GM12878 (cell line): ENCODE measurements at regions of chr13 and their contacts with region 1.

Region 1: GRCh38 chr13:43132257-43132656 is 108.9 kb downstream of the DNAJC15 start:
- DNase-seq: no peak
- ATAC-seq: peak; percentile 71
- H3K4me3 ChIP-seq: no peak overlapping the region
- H3K27ac ChIP-seq: no peak overlapping the region
- H3K4me1 ChIP-seq: 0 out of 2 replicates have a peak, but pooled peaks cover 8% of the 10 kb centered on the region
- H3K27me3 ChIP-seq: no peaks in the 10 kb centered on the region; a peak in 1 of 4 replicates
- CTCF ChIP-seq: peak; percentile 18 to 67 (median 39); a peak in 5 of 6 replicates
- EP300 ChIP-seq: no peak
- POLR2A ChIP-seq: no peak
- RAD21 ChIP-seq: peak; percentile 77

Region 2: DNA sequence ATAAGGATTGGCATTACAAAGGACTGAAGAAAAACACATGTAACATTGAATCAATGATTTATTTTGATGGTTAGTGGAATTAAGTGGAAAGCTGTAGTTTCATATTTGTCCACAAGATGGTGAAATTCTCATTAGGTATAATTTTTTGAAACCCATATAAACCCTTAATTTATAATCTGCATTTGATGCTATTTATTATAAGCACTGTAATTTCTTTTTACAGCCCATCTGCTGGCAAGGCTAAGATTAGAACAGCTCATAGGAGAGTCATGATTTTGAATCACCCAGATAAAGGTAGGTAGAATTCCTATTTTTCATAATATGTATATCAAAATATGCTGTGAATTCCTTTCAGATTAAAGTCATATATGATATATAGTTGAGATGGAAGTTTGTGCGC is 46.7 kb before region 1 on chr13:
- CTCF ChIA-PET with region 1: interaction called, 11 read pairs
- POLR2A ChIA-PET with region 1: no interaction called
- RAD21 ChIA-PET with region 1: interaction called, 10 read pairs
- SMC1A ChIA-PET with region 1: interaction called, 5 read pairs
- in situ Hi-C with region 1: no loop called
- intact Hi-C with region 1: no loop called
- DNase-seq: no peak
- ATAC-seq: no peak
- H3K4me3 ChIP-seq: no peak overlapping the region
- H3K27ac ChIP-seq: no peak overlapping the region
- H3K4me1 ChIP-seq: peaks cover 2% of the 10 kb centered on the region; the same call in 1 of the 2 replicates
- H3K27me3 ChIP-seq: no peaks in the 10 kb centered on the region
- CTCF ChIP-seq: peak; percentile 3 to 44 (median 30); a peak in 2 of 6 replicates
- EP300 ChIP-seq: no peak
- POLR2A ChIP-seq: no peak
- RAD21 ChIP-seq: peak; percentile 36; the same call in 1 of the 2 replicates